ENCODE measurements at regions of chrX and their contacts with region 1.

Region 1: GRCh38 chrX:6748595-6748994 is 213.7 kb upstream of the VCX3A start:
- DNase-seq: no peak
- H3K4me3 ChIP-seq: no peak overlapping the region
- H3K27ac ChIP-seq: no peak overlapping the region
- H3K4me1 ChIP-seq: no peaks in the 10 kb centered on the region
- H3K27me3 ChIP-seq: no peaks in the 10 kb centered on the region
- CTCF ChIP-seq: no peak

Region 2: DNA sequence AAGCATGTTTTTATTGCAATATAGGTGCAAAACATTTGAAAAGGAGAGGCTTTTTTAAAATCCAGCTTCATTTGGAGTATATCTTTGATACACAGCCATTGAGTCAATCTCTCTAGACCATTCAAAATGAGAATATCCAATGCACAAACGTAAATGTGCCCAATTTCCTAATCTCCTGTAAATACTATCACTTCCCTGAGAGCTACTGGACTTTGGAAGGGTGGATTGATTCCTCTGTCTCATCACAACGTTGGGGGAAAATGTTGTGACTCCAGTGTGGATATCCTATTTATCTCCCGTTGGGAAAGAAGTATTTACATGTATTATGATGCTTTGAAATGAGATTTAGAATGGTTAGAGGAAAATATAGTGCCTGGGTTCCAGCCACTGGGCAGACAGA is 149.4 kb before region 1 on chrX:
- CTCF ChIA-PET with region 1: no interaction called
- dilution Hi-C with region 1: no loop called
- in situ Hi-C with region 1: no loop called
- intact Hi-C with region 1: loop called (anchors 5 kb)
- DNase-seq: no peak
- H3K4me3 ChIP-seq: no peak overlapping the region
- H3K27ac ChIP-seq: no peak overlapping the region
- H3K4me1 ChIP-seq: no peaks in the 10 kb centered on the region
- H3K27me3 ChIP-seq: no peaks in the 10 kb centered on the region
- CTCF ChIP-seq: no peak